ENCODE measurements at regions of chr16 and their contacts with region 1.

Region 1: GRCh38 chr16:58243528-58244004 is 45.7 kb upstream of the CSNK2A2 start:
- DNase-seq: no peak
- ATAC-seq: peak; percentile 90
- H3K4me3 Mint-ChIP-seq: peak overlapping the region; percentile 69
- H3K27ac Mint-ChIP-seq: peak overlapping the region; percentile 89
- H3K4me1 Mint-ChIP-seq: peaks cover 33% of the 10 kb centered on the region
- H3K27me3 Mint-ChIP-seq: peaks cover 2% of the 10 kb centered on the region
- CTCF ChIP-seq: no peak

Region 2: GRCh38 chr16:58198022-58198683 is 45.4 kb before region 1 on chr16 and contains the start of gene CSNK2A2:
- CTCF ChIA-PET with region 1: interaction called, 10 read pairs
- POLR2A ChIA-PET with region 1: interaction called, 7 read pairs
- intact Hi-C with region 1: loop called (anchors 2 kb)
- DNase-seq: peak; percentile 73
- ATAC-seq: peak; percentile 94
- H3K4me3 Mint-ChIP-seq: peak within 1 kb of the TSS; percentile 87
- H3K27ac Mint-ChIP-seq: peak within 1 kb of the TSS; percentile 65
- H3K4me1 Mint-ChIP-seq: peaks cover 33% of the 10 kb centered on the region
- H3K27me3 Mint-ChIP-seq: no peaks in the 10 kb centered on the region
- CTCF ChIP-seq: no peak
- total RNA-seq, gene CSNK2A2: 77.3 and 85.5 TPM in 2 replicates

Region 3: GRCh38 chr16:58212824-58213655 is 30.5 kb before region 1 on chr16:
- CTCF ChIA-PET with region 1: no interaction called
- POLR2A ChIA-PET with region 1: interaction called, 11 read pairs
- intact Hi-C with region 1: loop called (anchors 1 kb)
- DNase-seq: no peak
- ATAC-seq: no peak
- H3K4me3 Mint-ChIP-seq: no peak overlapping the region
- H3K27ac Mint-ChIP-seq: no peak overlapping the region
- H3K4me1 Mint-ChIP-seq: peaks cover 34% of the 10 kb centered on the region
- H3K27me3 Mint-ChIP-seq: peaks cover 2% of the 10 kb centered on the region
- CTCF ChIP-seq: no peak

Measured in activated B cell treated with CpG ODN at 0.5 μM for 24 hours (primary cell).